Activated naive CD8-positive, alpha-beta T cell treated with anti-CD3 and anti-CD28 coated beads, Interleukin-2, amount 10 ng/mL, durations not matched to agents 7 days and 5 days (primary cell): ENCODE measurements at regions of chr16 and their contacts with region 1.

Region 1: GRCh38 chr16:11783319-11784037 is 13.6 kb downstream of the ZC3H7A start:
- DNase-seq: no peak
- ATAC-seq: peak; percentile 73
- H3K4me3 Mint-ChIP-seq: peak overlapping the region; percentile 78
- H3K27ac Mint-ChIP-seq: peak overlapping the region; percentile 97
- H3K4me1 Mint-ChIP-seq: peaks cover 51% of the 10 kb centered on the region
- H3K27me3 Mint-ChIP-seq: no peaks in the 10 kb centered on the region

Region 2: DNA sequence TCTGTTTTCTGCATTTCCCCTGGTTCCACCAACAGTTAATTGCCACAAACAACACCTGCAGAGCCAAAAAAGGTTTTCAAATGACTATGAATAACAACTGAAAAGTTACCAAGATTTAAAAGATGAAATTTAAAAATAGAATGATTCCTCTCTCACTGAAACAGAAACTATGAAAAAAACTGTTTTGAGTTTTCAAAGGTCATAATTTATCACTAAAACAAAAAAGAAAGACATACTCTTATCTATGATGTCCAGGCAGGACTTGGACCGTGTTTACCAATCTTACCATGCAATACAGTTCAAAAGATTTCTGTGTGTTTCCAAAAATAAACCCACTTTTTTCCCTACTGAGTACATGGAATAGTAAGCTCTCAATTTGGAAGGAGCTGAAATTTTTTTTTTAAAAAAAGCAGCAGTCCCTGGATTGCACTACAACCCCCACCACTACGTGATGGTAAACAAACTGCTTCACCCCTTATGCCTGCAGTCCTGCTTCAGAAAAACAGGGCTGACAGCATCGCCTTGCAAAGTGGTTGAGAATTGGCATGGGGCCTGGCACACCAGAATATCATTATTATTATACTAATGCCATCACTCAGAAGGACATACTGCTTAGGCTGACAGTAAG is 49.3 kb before region 1 on chr16:
- POLR2A ChIA-PET with region 1: no interaction called
- DNase-seq: no peak
- ATAC-seq: no peak
- H3K4me3 Mint-ChIP-seq: no peak overlapping the region
- H3K27ac Mint-ChIP-seq: no peak overlapping the region
- H3K4me1 Mint-ChIP-seq: peaks cover 31% of the 10 kb centered on the region
- H3K27me3 Mint-ChIP-seq: no peaks in the 10 kb centered on the region

Region 3: GRCh38 chr16:11797166-11797956 is 13.9 kb after region 1 on chr16 and contains the start of gene ZC3H7A:
- POLR2A ChIA-PET with region 1: interaction called, 21 read pairs
- DNase-seq: peak; percentile 98
- ATAC-seq: peak; percentile 99
- H3K4me3 Mint-ChIP-seq: peak within 1 kb of the TSS; percentile 91
- H3K27ac Mint-ChIP-seq: peak within 1 kb of the TSS; percentile 90
- H3K4me1 Mint-ChIP-seq: peaks cover 63% of the 10 kb centered on the region
- H3K27me3 Mint-ChIP-seq: no peaks in the 10 kb centered on the region
- total RNA-seq, gene ZC3H7A: 73.1 to 82.5 TPM

Region 4: DNA sequence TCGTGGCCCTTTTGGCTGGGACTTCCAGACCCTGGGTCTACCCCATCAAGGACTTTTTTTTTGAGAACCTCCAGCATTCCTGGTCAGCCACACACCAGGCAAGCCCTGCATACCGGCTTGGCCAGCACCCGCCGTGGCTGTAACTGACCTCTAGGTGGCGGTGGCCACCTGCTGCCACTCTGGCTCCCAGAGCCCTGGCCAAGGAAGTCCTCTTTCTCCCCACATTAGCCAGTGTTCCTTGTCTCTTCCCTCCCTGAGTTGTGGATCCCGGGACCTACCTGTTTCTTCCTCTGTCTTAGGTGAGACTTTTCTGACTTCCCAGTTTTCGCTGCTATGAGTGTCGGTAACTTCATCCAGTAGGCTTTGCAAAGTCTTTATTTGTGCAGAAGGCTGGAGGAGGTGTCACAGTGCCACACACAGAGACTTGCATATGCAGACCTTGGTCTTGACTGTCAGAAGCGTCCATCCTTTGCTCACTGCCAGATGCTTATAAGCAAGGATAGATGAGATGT is 671.9 kb after region 1 on chr16:
- POLR2A ChIA-PET with region 1: no interaction called
- DNase-seq: peak; percentile 58
- ATAC-seq: peak; percentile 34
- H3K4me3 Mint-ChIP-seq: no peak overlapping the region
- H3K27ac Mint-ChIP-seq: no peak overlapping the region
- H3K4me1 Mint-ChIP-seq: peaks cover 12% of the 10 kb centered on the region
- H3K27me3 Mint-ChIP-seq: no peaks in the 10 kb centered on the region